Heart right ventricle (tissue), 16 donors: ENCODE measurements at regions of chr7 and their contacts with region 1.

Region 1: GRCh38 chr7:140810830-140811556 is 113.7 kb downstream of the BRAF start:
- DNase-seq: peak in 1 of 2 donors; percentile 69
- ATAC-seq: peak; percentile 79 to 93 (median 91)
- H3K4me3 ChIP-seq: no peak overlapping the region
- H3K27ac ChIP-seq: no peak overlapping the region
- H3K4me1 ChIP-seq: peaks cover 0 to 13% (median 0%) of the 10 kb centered on the region in 9 donors
- H3K27me3 ChIP-seq: no peaks in the 10 kb centered on the region
- CTCF ChIP-seq: peak; percentile 51 to 84 (median 80)

Region 2: DNA sequence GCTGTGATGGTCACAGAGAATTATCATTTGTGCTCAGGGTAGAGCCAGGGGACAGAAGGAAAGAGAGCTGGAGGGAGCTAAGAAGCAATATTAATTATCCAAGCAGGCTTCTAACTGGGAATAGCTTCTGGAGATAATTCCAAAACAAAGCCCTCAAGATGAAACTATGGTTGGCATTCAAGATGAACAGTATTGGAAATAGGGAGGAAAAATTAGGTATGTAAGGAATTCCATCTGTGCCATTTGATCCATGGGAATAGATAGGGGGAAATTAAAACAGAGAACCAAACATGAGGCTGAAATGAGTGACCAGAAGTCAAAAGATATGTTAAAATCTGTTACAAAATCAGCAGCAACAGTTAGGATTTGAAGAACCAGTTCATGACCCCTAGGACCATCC is 39.2 kb before region 1 on chr7:
- intact Hi-C with region 1: no loop called
- DNase-seq: no peak
- ATAC-seq: no peak
- H3K4me3 ChIP-seq: no peak overlapping the region
- H3K27ac ChIP-seq: no peak overlapping the region
- H3K4me1 ChIP-seq: peaks cover 0 to 9% (median 0%) of the 10 kb centered on the region in 9 donors
- H3K27me3 ChIP-seq: no peaks in the 10 kb centered on the region
- CTCF ChIP-seq: no peak

Region 3: DNA sequence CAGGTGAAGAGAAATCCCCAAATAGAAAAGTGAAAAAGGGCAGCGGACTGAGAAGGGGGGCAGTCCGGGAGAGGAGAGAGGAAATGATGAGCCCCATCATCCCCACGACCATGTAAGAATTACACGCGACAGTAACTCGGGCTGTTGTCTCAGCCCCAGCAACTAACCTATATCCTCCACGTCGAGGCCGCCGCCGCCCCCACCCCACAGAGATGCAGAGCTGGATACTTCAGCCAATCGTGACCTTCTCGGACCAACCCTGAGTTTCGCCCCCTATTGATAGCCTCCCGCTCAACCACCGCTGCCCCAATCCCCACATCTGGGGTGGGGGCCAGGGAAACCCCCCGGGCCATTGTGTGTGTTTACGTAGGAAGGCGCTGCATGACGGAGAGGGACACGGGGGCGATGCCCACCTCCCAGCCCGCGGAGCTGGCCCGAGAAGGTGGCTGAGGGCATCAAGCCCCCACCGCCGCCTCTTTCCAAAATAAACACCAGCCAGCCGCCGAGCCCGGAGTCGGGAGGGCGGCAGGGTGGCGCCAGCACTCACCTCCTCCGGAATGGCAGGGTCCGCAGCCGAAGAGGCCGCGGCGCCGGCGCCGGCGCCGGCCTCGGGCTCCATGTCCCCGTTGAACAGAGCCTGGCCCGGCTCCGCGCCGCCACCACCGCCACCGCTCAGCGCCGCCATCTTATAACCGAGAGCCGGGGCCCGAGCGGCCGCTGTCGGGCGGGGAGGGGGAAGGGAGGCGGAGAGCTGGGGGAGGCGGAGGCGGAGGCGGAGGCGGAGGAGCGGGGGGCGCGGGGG is 113.2 kb after region 1 on chr7:
- intact Hi-C with region 1: loop called in 7 of 10 experiments (anchors 5 to 10 kb)
- DNase-seq: peak; percentile 76 to 82
- ATAC-seq: peak; percentile 76 to 89 (median 80)
- H3K4me3 ChIP-seq: peak overlapping the region; percentile 81 to 99 (median 96)
- H3K27ac ChIP-seq: peak overlapping the region; percentile 96 to 100 (median 99)
- H3K4me1 ChIP-seq: peaks cover 5 to 45% (median 39%) of the 10 kb centered on the region in 9 donors
- H3K27me3 ChIP-seq: no peaks in the 10 kb centered on the region
- CTCF ChIP-seq: peak in 6 of 9 donors; percentile 37 to 71 (median 57)

Region 4: GRCh38 chr7:141001122-141001521 is 190.1 kb after region 1 on chr7:
- intact Hi-C with region 1: loop called in 1 of 10 experiments (anchors 10 kb)
- DNase-seq: no peak
- ATAC-seq: no peak
- H3K4me3 ChIP-seq: no peak overlapping the region
- H3K27ac ChIP-seq: no peak overlapping the region
- H3K4me1 ChIP-seq: no peaks in the 10 kb centered on the region
- H3K27me3 ChIP-seq: peaks cover 0 to 5% (median 0%) of the 10 kb centered on the region in 7 donors
- CTCF ChIP-seq: no peak

Region 5: DNA sequence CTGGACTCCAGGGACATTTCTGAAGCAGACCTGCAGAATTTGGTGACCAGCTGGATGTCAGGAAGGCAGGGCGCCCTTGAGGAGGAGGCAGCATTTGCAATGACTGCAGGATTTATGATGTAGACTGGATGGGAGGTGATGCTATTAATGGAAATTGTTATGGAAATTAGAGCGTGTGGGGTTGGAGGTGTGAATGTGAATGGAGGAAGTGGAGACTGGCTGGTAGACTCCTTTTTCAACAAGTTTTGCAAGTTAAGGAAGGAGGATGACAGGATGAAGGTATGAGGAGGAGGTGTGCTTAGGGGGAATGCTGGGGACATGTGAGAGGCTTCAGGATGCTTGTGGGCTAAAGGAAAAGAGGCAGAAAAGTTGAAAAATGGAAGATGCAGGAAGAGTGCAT is 399.9 kb after region 1 on chr7:
- intact Hi-C with region 1: loop called in 2 of 10 experiments (anchors 10 kb)
- DNase-seq: no peak
- ATAC-seq: no peak
- H3K4me3 ChIP-seq: no peak overlapping the region
- H3K27ac ChIP-seq: no peak overlapping the region
- H3K4me1 ChIP-seq: peaks cover 0 to 21% (median 10%) of the 10 kb centered on the region in 9 donors
- H3K27me3 ChIP-seq: no peaks in the 10 kb centered on the region
- CTCF ChIP-seq: no peak

Region 6: GRCh38 chr7:141220263-141220880 is 409.4 kb after region 1 on chr7:
- intact Hi-C with region 1: loop called in 3 of 10 experiments (anchors 10 kb)
- DNase-seq: no peak
- ATAC-seq: no peak
- H3K4me3 ChIP-seq: no peak overlapping the region
- H3K27ac ChIP-seq: no peak overlapping the region
- H3K4me1 ChIP-seq: peaks cover 0 to 8% (median 0%) of the 10 kb centered on the region in 9 donors
- H3K27me3 ChIP-seq: no peaks in the 10 kb centered on the region
- CTCF ChIP-seq: peak in 5 of 9 donors; percentile 20 to 43 (median 23)

Region 7: DNA sequence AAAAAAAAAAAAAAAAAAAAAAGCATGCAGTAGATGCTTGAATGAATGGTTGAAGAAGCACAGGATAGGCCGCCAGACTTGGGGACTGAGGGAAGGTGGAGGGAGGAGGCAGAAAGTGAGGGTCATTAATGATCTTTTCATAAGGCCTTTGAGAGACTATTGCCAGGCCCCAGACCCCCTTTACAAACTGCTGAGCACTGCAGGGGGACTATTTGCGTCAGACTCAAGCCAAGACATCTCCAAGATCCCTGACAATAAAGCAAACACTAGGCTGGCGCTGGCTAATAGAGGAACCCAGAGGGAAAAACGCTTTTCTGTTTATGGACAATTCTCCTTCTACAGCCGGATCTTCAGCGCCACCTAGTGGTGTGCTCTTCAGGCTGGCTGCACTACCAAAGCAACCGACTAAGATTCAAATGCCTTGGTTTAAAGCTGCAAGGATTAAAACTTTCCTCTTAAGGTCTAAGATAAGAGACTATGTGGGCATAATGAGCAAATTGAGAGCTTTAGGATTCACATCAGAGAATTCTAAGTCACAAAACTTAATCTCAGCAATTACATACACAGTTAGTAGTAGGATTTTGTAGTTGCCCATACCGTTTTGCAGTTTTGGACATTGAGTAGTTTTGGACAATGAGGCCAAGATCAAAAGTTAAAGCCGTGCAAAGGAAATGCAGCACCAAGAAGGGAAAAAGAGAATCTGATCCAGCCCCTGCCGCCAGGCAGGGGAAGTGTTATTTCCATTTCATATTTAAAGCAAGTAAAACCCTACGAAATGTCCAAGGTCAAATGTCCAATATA is 722.4 kb after region 1 on chr7:
- intact Hi-C with region 1: loop called in 8 of 10 experiments (anchors 1 to 10 kb)
- DNase-seq: peak; percentile 52 to 58
- ATAC-seq: peak; percentile 60 to 94 (median 83)
- H3K4me3 ChIP-seq: no peak overlapping the region
- H3K27ac ChIP-seq: peak overlapping the region in 4 of 10 donors; percentile 1 to 42 (median 21)
- H3K4me1 ChIP-seq: peaks cover 0 to 20% (median 0%) of the 10 kb centered on the region in 9 donors
- H3K27me3 ChIP-seq: peaks cover 0 to 11% (median 0%) of the 10 kb centered on the region in 7 donors
- CTCF ChIP-seq: peak; percentile 91 to 99 (median 95)